Colonic mucosa (tissue), 4 donors: ENCODE measurements at regions of chr17 and their contacts with region 1.

Region 1: DNA sequence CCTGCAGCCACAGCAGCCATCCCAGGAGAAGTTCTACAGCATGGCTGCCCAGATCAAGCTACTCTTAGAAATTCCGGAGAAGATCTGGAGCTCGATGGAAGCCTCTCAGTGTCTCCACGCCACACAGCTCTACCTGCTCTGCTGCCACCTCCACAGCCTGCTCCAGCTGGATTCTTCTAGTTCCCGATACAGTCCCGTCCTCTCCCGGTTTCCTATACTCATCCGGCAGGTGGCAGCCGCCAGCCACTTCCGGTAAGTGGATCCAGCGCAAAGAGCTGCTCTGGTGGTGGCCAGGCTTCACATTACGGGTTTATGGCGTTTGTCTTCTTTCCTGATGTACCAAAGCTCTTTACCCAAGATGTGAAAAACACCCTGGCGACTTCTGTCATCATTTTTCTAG is 3.6 kb downstream of the COG1 start:
- DNase-seq: peak; percentile 77
- H3K4me3 ChIP-seq: no peak overlapping the region
- H3K27ac ChIP-seq: peak overlapping the region; percentile 44
- H3K4me1 ChIP-seq: peaks cover 4% of the 10 kb centered on the region
- H3K27me3 ChIP-seq: no peaks in the 10 kb centered on the region
- CTCF ChIP-seq: peak; percentile 34

Region 2: DNA sequence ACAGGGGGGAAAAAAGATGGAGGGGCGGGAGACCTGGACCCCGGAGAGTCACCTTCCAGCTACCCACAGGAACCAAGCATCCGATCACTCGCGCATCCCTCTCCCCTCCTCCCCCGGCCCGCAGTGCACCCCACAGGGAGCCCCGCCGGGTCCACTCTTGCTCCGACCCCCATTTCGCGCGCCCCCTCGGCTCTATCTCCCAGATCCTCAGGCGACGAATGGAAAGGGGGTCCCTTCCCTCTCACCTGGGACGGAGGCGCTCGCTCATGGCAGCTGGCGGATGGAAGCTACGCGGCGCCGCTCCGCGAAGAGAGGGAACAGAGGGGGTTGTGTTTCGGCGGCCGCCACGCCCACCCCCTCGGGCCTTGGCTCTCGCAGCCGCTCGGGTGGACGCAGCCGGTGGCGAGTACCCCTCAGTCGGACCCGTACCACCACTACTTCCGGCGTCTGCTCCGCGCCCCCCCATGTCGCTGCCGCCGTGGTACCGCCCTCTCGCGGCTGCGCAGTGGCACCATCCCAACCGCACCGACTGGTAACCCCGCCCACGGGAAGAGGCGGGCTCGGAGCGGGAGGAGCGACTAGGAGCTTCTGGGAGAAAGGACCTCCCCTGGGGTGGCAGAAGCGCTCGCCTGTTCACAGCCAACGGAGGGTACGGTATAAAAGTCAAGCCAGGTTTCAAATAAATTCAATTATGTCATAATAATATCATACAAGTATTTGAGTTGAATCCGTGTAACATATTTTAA is 35.5 kb after region 1 on chr17:
- intact Hi-C with region 1: loop called (anchors 5 kb)
- DNase-seq: peak; percentile 98
- H3K4me3 ChIP-seq: peak overlapping the region; percentile 96
- H3K27ac ChIP-seq: peak overlapping the region; percentile 69
- H3K4me1 ChIP-seq: peaks cover 18% of the 10 kb centered on the region
- H3K27me3 ChIP-seq: no peaks in the 10 kb centered on the region
- CTCF ChIP-seq: no peak

Region 3: GRCh38 chr17:73255671-73256181 is 59.2 kb after region 1 on chr17:
- intact Hi-C with region 1: no loop called
- DNase-seq: peak; percentile 51
- H3K4me3 ChIP-seq: no peak overlapping the region
- H3K27ac ChIP-seq: no peak overlapping the region
- H3K4me1 ChIP-seq: no peaks in the 10 kb centered on the region
- H3K27me3 ChIP-seq: no peaks in the 10 kb centered on the region
- CTCF ChIP-seq: peak; percentile 98

Region 4: DNA sequence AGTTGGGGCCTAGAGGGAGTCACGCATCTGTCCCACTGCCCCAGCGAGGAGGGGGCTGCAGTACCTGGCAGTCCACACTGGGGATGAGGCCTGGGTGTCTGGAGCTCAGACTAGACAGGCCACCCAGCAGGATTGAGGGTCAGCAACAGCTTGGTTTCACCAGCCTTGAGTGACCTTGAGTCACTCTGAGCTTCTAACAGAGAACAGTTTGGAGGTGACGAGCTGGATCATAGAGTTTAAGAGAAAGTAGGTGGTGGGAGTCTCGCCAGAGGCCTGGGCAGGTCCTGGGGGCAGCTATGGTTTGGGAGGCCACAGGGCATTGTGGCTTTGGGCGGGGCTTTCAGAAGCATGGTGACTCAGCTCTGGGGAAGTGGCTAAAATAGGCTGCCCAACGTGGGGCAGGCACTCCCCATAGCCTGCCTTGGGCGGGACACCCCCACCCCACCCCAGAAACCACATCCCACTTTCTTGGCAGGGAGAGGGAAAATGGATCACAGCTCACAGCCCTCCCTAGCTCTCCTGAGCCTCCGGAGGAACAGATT is 94.8 kb after region 1 on chr17:
- intact Hi-C with region 1: no loop called
- DNase-seq: peak; percentile 73
- H3K4me3 ChIP-seq: no peak overlapping the region
- H3K27ac ChIP-seq: peak overlapping the region; percentile 82
- H3K4me1 ChIP-seq: peaks cover 34% of the 10 kb centered on the region
- H3K27me3 ChIP-seq: no peaks in the 10 kb centered on the region
- CTCF ChIP-seq: no peak